ENCODE measurements at regions of chr16 and their contacts with region 1.

Region 1: GRCh38 chr16:78619811-78620210 is 520.4 kb downstream of the WWOX start:
- DNase-seq: no peak
- H3K4me3 ChIP-seq: no peak overlapping the region
- H3K27ac ChIP-seq: no peak overlapping the region
- H3K4me1 ChIP-seq: no peaks in the 10 kb centered on the region
- H3K27me3 ChIP-seq: no peaks in the 10 kb centered on the region
- CTCF ChIP-seq: no peak

Region 2: DNA sequence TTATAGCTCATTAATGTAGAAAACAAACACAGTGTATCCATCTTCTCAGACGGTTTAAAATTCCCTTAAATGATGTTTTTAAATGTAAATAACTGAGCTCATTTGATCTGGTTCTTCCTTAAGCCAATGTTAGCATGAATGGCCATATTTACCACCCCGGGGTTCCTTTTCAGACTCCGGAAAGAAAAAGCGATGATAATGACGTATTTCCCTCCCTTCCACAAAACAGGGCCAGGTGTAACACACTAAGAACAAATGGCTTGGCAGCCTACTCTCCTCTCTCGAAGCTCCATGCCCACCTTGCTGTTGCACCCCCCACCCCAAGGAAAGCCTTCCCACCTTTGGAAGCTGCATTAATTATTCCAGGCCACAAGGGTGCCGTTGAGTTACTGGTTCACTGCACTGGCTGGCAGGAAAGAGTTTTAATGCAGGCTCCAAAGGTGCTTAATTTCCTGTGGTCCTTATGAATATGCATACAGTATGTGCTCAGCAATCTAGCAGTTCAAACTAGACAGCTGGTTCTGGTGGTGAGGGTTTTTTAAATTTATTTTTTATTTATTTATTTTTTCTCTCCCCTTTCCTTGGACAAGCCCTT is 141.4 kb before region 1 on chr16:
- CTCF ChIA-PET with region 1: no interaction called
- POLR2A ChIA-PET with region 1: no interaction called
- intact Hi-C with region 1: no loop called
- DNase-seq: peak in 1 of 2 experiments; percentile 26
- H3K4me3 ChIP-seq: no peak overlapping the region
- H3K27ac ChIP-seq: no peak overlapping the region
- H3K4me1 ChIP-seq: no peaks in the 10 kb centered on the region
- H3K27me3 ChIP-seq: no peaks in the 10 kb centered on the region
- CTCF ChIP-seq: peak; percentile 75

Region 3: GRCh38 chr16:78570399-78571141 is 49.2 kb before region 1 on chr16:
- CTCF ChIA-PET with region 1: no interaction called
- POLR2A ChIA-PET with region 1: no interaction called
- intact Hi-C with region 1: no loop called
- DNase-seq: no peak
- H3K4me3 ChIP-seq: no peak overlapping the region
- H3K27ac ChIP-seq: no peak overlapping the region
- H3K4me1 ChIP-seq: no peaks in the 10 kb centered on the region
- H3K27me3 ChIP-seq: no peaks in the 10 kb centered on the region
- CTCF ChIP-seq: no peak

Region 4: GRCh38 chr16:78641433-78641832 is 21.6 kb after region 1 on chr16:
- CTCF ChIA-PET with region 1: no interaction called
- POLR2A ChIA-PET with region 1: interaction called, 11 read pairs
- intact Hi-C with region 1: no loop called
- DNase-seq: no peak
- H3K4me3 ChIP-seq: no peak overlapping the region
- H3K27ac ChIP-seq: no peak overlapping the region
- H3K4me1 ChIP-seq: no peaks in the 10 kb centered on the region
- H3K27me3 ChIP-seq: no peaks in the 10 kb centered on the region
- CTCF ChIP-seq: no peak

Region 5: GRCh38 chr16:78684040-78684611 is 64.3 kb after region 1 on chr16:
- CTCF ChIA-PET with region 1: no interaction called
- POLR2A ChIA-PET with region 1: no interaction called
- intact Hi-C with region 1: no loop called
- DNase-seq: peak; percentile 69 to 70
- H3K4me3 ChIP-seq: no peak overlapping the region
- H3K27ac ChIP-seq: peak overlapping the region; percentile 32; the same call in 1 of the 2 replicates
- H3K4me1 ChIP-seq: no peaks in the 10 kb centered on the region; the same call in 1 of the 2 replicates
- H3K27me3 ChIP-seq: no peaks in the 10 kb centered on the region
- CTCF ChIP-seq: no peak

Measured in PC-9 (cell line).